Activated T-helper 2 cell treated with anti-CD3 and anti-CD28 coated beads, Interferon-gamma antibody, Interleukin-2, Interleukin-4, amounts not matched to agents 10 μg/mL and 5 μg/mL and 100 μg/mL, durations not matched to agents 14 hours and 24 hours and 36 hours (primary cell): ENCODE measurements at regions of chr7 and their contacts with region 1.

Region 1: GRCh38 chr7:76314042-76314721 is 11.7 kb downstream of the HSPB1 start:
- DNase-seq: peak; percentile 93
- H3K4me3 Mint-ChIP-seq: peak overlapping the region; percentile 53
- H3K27ac Mint-ChIP-seq: peak overlapping the region; percentile 82
- H3K4me1 Mint-ChIP-seq: peaks cover 25% of the 10 kb centered on the region
- H3K27me3 Mint-ChIP-seq: no peaks in the 10 kb centered on the region

Region 2: GRCh38 chr7:76047811-76048667 is 266.1 kb before region 1 on chr7 and contains the starts of genes MDH2 and STYXL1:
- intact Hi-C with region 1: loop called (anchors 10 kb)
- DNase-seq: peak; percentile 88
- H3K4me3 Mint-ChIP-seq: peak within 1 kb of the TSS; percentile 99
- H3K27ac Mint-ChIP-seq: peak within 1 kb of the TSS; percentile 97
- H3K4me1 Mint-ChIP-seq: peaks cover 35% of the 10 kb centered on the region
- H3K27me3 Mint-ChIP-seq: no peaks in the 10 kb centered on the region
- total RNA-seq, gene MDH2: 268 and 285 TPM in 2 replicates
- total RNA-seq, gene STYXL1: 27.7 and 36.1 TPM in 2 replicates

Region 3: GRCh38 chr7:76201730-76202665 is 112.2 kb before region 1 on chr7 and contains the start of gene SRRM3:
- intact Hi-C with region 1: loop called (anchors 1 kb)
- DNase-seq: peak; percentile 80
- H3K4me3 Mint-ChIP-seq: no peak within 1 kb of the TSS
- H3K27ac Mint-ChIP-seq: no peak within 1 kb of the TSS
- H3K4me1 Mint-ChIP-seq: no peaks in the 10 kb centered on the region
- H3K27me3 Mint-ChIP-seq: peaks cover 6% of the 10 kb centered on the region
- total RNA-seq, gene SRRM3: 0.11 and 0.23 TPM in 2 replicates

Region 4: GRCh38 chr7:76291343-76292212 is 22.6 kb before region 1 on chr7:
- intact Hi-C with region 1: loop called (anchors 1 kb)
- DNase-seq: peak; percentile 84
- H3K4me3 Mint-ChIP-seq: peak overlapping the region; percentile 3
- H3K27ac Mint-ChIP-seq: peak overlapping the region; percentile 78
- H3K4me1 Mint-ChIP-seq: peaks cover 13% of the 10 kb centered on the region
- H3K27me3 Mint-ChIP-seq: no peaks in the 10 kb centered on the region

Region 5: DNA sequence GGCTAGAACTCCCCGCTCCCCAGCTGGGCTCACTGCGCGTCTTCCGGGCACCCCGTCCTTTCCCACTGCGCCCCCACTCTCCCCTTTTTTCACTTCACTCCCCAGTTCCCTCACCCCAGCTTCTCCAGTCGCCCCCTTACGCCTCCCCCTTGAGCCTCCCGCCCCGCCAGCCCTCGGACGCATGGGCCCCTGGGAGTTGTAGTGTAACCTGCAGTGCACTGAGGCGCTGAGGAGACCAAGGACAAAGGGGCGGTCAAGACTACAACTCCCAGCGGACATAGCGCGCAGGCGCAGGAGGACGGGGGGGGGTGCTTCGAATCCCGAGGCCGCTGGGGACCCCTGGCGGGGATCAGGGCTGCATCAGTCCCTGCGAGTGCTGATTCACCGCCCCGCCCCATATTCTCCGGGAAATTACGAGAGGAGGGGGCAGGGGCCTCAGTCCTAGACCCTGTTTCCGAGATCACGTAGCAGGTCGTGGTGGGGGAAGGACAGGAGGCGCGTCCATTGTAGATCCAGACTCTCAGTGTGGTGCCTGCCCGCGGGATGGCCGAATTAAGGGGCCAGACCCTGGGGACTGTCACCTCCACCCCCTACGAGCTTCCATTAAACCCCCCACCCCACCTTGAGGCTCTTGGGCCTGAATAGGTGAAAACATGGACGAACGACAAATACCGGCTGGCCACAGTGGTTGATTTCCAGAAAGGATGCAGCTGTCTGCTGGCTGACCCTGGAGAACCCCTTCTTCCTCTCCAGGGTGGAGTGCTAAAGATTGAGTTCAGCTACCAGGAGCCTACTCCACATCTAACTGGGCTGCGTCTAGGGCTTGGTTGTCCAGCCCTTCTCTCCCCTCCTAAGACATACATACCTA is 45.2 kb after region 1 on chr7:
- intact Hi-C with region 1: loop called (anchors 1 kb)
- DNase-seq: peak; percentile 92
- H3K4me3 Mint-ChIP-seq: peak overlapping the region; percentile 87
- H3K27ac Mint-ChIP-seq: peak overlapping the region; percentile 92
- H3K4me1 Mint-ChIP-seq: peaks cover 39% of the 10 kb centered on the region
- H3K27me3 Mint-ChIP-seq: no peaks in the 10 kb centered on the region